CD8-positive, alpha-beta memory T cell (primary cell): ENCODE measurements at regions of chr2 and their contacts with region 1.

Region 1: GRCh38 chr2:95022309-95023221 is 2.9 kb upstream of the MAL start:
- DNase-seq: peak; percentile 44 to 82 (median 48)
- H3K4me3 ChIP-seq: no peak overlapping the region
- H3K4me3 Mint-ChIP-seq: peak overlapping the region in 6 of 7 donors; percentile 35 to 82 (median 52)
- H3K27ac ChIP-seq: no peak overlapping the region
- H3K27ac Mint-ChIP-seq: peak overlapping the region in 5 of 8 donors; percentile 39 to 77 (median 69)
- H3K4me1 ChIP-seq: peaks cover 32% of the 10 kb centered on the region
- H3K4me1 Mint-ChIP-seq: peaks cover 24 to 48% (median 34%) of the 10 kb centered on the region in 3 donors
- H3K27me3 ChIP-seq: no peaks in the 10 kb centered on the region
- H3K27me3 Mint-ChIP-seq: peaks cover 22 to 30% of the 10 kb centered on the region in 2 donors

Region 2: DNA sequence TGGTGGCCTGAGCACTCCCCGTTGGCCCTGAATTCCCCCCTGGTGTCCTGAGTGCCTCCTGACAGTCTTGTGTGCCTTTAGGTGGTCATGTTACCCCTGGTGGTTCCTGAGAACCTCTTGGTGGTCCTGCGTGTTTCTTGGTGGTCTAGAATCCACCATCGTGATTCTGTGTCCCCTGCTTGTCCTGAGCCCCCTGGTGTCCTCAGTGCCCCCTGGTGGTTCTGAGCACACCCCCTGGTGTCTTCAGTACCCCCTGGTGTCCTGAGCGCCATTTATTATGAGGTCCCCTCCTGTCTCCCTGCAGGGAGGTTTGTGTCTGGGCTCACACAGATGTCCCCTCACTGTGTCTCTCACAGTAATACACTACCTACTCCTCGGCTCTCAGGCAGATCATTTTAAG is 58.4 kb before region 1 on chr2:
- CTCF ChIA-PET with region 1: no interaction called
- POLR2A ChIA-PET with region 1: no interaction called
- DNase-seq: no peak
- H3K4me3 ChIP-seq: no peak overlapping the region
- H3K4me3 Mint-ChIP-seq: no peak overlapping the region
- H3K27ac ChIP-seq: no peak overlapping the region
- H3K27ac Mint-ChIP-seq: no peak overlapping the region
- H3K4me1 ChIP-seq: no peaks in the 10 kb centered on the region
- H3K4me1 Mint-ChIP-seq: no peaks in the 10 kb centered on the region
- H3K27me3 ChIP-seq: no peaks in the 10 kb centered on the region
- H3K27me3 Mint-ChIP-seq: peaks cover 8 to 20% of the 10 kb centered on the region in 2 donors

Region 3: GRCh38 chr2:95043300-95044093 is 20.9 kb after region 1 on chr2:
- CTCF ChIA-PET with region 1: interaction called, 10 read pairs
- POLR2A ChIA-PET with region 1: no interaction called
- DNase-seq: no peak
- H3K4me3 ChIP-seq: no peak overlapping the region
- H3K4me3 Mint-ChIP-seq: no peak overlapping the region
- H3K27ac ChIP-seq: no peak overlapping the region
- H3K27ac Mint-ChIP-seq: peak overlapping the region in 2 of 8 donors; percentile 6 to 72
- H3K4me1 ChIP-seq: peaks cover 40% of the 10 kb centered on the region
- H3K4me1 Mint-ChIP-seq: peaks cover 13 to 49% (median 24%) of the 10 kb centered on the region in 3 donors
- H3K27me3 ChIP-seq: no peaks in the 10 kb centered on the region
- H3K27me3 Mint-ChIP-seq: peaks cover 0 to 12% of the 10 kb centered on the region in 2 donors

Region 4: DNA sequence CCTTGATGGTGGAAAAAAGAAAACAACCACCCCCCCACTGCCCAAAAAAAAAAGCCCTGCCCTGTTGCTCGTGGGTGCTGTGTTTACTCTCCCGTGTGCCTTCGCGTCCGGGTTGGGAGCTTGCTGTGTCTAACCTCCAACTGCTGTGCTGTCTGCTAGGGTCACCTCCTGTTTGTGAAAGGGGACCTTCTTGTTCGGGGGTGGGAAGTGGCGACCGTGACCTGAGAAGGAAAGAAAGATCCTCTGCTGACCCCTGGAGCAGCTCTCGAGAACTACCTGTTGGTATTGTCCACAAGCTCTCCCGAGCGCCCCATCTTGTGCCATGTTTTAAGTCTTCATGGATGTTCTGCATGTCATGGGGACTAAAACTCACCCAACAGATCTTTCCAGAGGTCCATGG is 31.0 kb after region 1 on chr2:
- CTCF ChIA-PET with region 1: interaction called, 14 read pairs
- POLR2A ChIA-PET with region 1: interaction called, 11 read pairs
- DNase-seq: peak in 1 of 5 donors; percentile 36
- H3K4me3 ChIP-seq: no peak overlapping the region
- H3K4me3 Mint-ChIP-seq: peak overlapping the region in 3 of 7 donors; percentile 41 to 83 (median 74)
- H3K27ac ChIP-seq: no peak overlapping the region
- H3K27ac Mint-ChIP-seq: peak overlapping the region in 5 of 8 donors; percentile 33 to 63 (median 57)
- H3K4me1 ChIP-seq: peaks cover 56% of the 10 kb centered on the region
- H3K4me1 Mint-ChIP-seq: peaks cover 12 to 45% (median 39%) of the 10 kb centered on the region in 3 donors
- H3K27me3 ChIP-seq: no peaks in the 10 kb centered on the region
- H3K27me3 Mint-ChIP-seq: peaks cover 0 to 8% of the 10 kb centered on the region in 2 donors

Region 5: GRCh38 chr2:95062242-95063085 is 39.9 kb after region 1 on chr2:
- CTCF ChIA-PET with region 1: interaction called, 15 read pairs
- POLR2A ChIA-PET with region 1: no interaction called
- DNase-seq: no peak
- H3K4me3 ChIP-seq: no peak overlapping the region
- H3K4me3 Mint-ChIP-seq: peak overlapping the region in 2 of 7 donors; percentile 24 to 34
- H3K27ac ChIP-seq: no peak overlapping the region
- H3K27ac Mint-ChIP-seq: peak overlapping the region in 5 of 8 donors; percentile 53 to 76 (median 65)
- H3K4me1 ChIP-seq: peaks cover 25% of the 10 kb centered on the region
- H3K4me1 Mint-ChIP-seq: peaks cover 10 to 28% (median 19%) of the 10 kb centered on the region in 3 donors
- H3K27me3 ChIP-seq: no peaks in the 10 kb centered on the region
- H3K27me3 Mint-ChIP-seq: peaks cover 4 to 10% of the 10 kb centered on the region in 2 donors

Region 6: DNA sequence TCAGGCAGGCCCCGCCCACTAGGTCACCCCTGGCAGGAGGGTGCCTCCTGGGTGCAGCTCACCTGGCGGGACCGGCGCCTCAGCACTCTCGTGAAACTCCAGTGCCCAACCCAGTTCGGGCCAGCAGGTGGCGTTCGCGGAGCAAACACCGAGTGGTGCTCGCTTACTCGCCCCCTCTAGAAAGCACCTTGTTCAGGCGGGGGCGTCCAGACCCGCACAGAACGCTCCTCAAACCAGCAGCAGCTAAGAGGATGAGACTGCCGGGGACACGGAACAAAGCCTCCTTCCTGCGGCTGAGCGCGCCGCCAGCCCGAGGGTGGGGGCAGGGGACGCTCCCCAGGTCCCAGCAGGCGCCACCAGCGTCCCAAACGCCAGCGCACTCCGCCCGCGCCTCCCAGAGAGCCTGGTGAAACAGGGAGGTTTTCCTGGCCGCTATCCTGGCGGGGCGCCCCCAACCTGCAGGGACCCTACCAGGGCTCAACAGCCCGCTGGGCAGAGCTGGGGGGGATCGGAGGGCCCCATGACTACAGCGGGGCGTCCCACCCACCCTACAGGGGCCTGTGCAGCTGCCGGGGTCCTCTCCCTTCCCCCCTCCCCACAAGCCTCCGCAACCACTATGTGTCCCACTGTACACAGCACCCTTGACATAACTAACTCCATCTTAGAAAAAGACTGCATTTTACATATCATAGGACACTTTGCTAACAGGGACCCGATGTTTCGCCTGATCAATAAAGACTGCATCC is 54.4 kb after region 1 on chr2:
- CTCF ChIA-PET with region 1: interaction called, 286 read pairs
- POLR2A ChIA-PET with region 1: interaction called, 44 read pairs
- DNase-seq: peak; percentile 71 to 89 (median 75)
- H3K4me3 ChIP-seq: peak overlapping the region; percentile 68
- H3K4me3 Mint-ChIP-seq: peak overlapping the region; percentile 71 to 85 (median 76)
- H3K27ac ChIP-seq: no peak overlapping the region
- H3K27ac Mint-ChIP-seq: peak overlapping the region in 6 of 8 donors; percentile 57 to 86 (median 72)
- H3K4me1 ChIP-seq: peaks cover 69% of the 10 kb centered on the region
- H3K4me1 Mint-ChIP-seq: peaks cover 42 to 72% (median 53%) of the 10 kb centered on the region in 3 donors
- H3K27me3 ChIP-seq: no peaks in the 10 kb centered on the region
- H3K27me3 Mint-ChIP-seq: peaks cover 0 to 12% of the 10 kb centered on the region in 2 donors

Region 7: DNA sequence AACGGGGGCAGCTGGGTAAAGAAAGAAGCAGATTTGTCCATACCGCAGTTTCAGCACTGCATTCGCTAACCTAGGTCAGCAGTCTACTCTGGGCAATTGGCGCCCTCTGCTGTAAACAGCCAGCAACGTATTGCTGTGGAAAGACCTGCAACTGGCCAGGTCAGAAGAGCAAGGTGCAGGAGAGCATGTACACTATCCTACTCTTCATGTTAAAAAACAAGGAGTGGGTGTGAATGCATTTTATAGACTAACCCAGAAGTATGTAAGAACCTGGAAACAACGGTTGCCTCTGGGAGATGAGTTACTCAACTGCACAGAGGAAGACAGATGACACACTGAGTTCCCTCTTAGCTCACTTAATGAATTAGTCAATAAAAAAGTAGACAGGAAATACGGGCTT is 92.9 kb after region 1 on chr2:
- CTCF ChIA-PET with region 1: interaction called, 92 read pairs
- POLR2A ChIA-PET with region 1: interaction called, 7 read pairs
- DNase-seq: peak; percentile 31 to 80 (median 46)
- H3K4me3 ChIP-seq: no peak overlapping the region
- H3K4me3 Mint-ChIP-seq: no peak overlapping the region
- H3K27ac ChIP-seq: no peak overlapping the region
- H3K27ac Mint-ChIP-seq: peak overlapping the region in 4 of 8 donors; percentile 2 to 76 (median 32)
- H3K4me1 ChIP-seq: peaks cover 34% of the 10 kb centered on the region
- H3K4me1 Mint-ChIP-seq: peaks cover 42 to 47% (median 46%) of the 10 kb centered on the region in 3 donors
- H3K27me3 ChIP-seq: no peaks in the 10 kb centered on the region
- H3K27me3 Mint-ChIP-seq: no peaks in the 10 kb centered on the region

Region 8: GRCh38 chr2:95121407-95122196 is 99.0 kb after region 1 on chr2 and contains the start of gene MRPS5:
- CTCF ChIA-PET with region 1: interaction called, 92 read pairs
- POLR2A ChIA-PET with region 1: interaction called, 8 read pairs
- DNase-seq: peak; percentile 76 to 85 (median 79)
- H3K4me3 ChIP-seq: peak within 1 kb of the TSS; percentile 74
- H3K4me3 Mint-ChIP-seq: peak within 1 kb of the TSS; percentile 95 to 99 (median 97)
- H3K27ac ChIP-seq: peak within 1 kb of the TSS; percentile 76
- H3K27ac Mint-ChIP-seq: peak within 1 kb of the TSS; percentile 86 to 97 (median 94)
- H3K4me1 ChIP-seq: peaks cover 33% of the 10 kb centered on the region
- H3K4me1 Mint-ChIP-seq: peaks cover 44 to 53% (median 51%) of the 10 kb centered on the region in 3 donors
- H3K27me3 ChIP-seq: no peaks in the 10 kb centered on the region
- H3K27me3 Mint-ChIP-seq: peaks cover 0 to 4% of the 10 kb centered on the region in 2 donors
- total RNA-seq, gene MRPS5: 69.0 to 75.9 TPM